H1 (cell line): ENCODE measurements at regions of chr15 and their contacts with region 1.

Region 1: GRCh38 chr15:29925227-29926082 is 103.2 kb upstream of the TJP1 start:
- DNase-seq: peak; percentile 79 to 93
- H3K4me3 ChIP-seq: no peak overlapping the region
- H3K27ac ChIP-seq: 0 out of 2 replicates have a peak overlapping the region, but pooled peaks have one; percentile 16
- H3K4me1 ChIP-seq: peaks cover 7 to 15% (median 10%) of the 10 kb centered on the region in 4 experiments
- H3K27me3 ChIP-seq: no peaks in the 10 kb centered on the region
- CTCF ChIP-seq: peak; percentile 97 to 99 (median 99)
- EP300 ChIP-seq: no peak
- POLR2A ChIP-seq: peak in 1 of 2 experiments; percentile 79; a peak in 2 of 3 replicates
- RAD21 ChIP-seq: peak; percentile 94 to 97

Region 2: DNA sequence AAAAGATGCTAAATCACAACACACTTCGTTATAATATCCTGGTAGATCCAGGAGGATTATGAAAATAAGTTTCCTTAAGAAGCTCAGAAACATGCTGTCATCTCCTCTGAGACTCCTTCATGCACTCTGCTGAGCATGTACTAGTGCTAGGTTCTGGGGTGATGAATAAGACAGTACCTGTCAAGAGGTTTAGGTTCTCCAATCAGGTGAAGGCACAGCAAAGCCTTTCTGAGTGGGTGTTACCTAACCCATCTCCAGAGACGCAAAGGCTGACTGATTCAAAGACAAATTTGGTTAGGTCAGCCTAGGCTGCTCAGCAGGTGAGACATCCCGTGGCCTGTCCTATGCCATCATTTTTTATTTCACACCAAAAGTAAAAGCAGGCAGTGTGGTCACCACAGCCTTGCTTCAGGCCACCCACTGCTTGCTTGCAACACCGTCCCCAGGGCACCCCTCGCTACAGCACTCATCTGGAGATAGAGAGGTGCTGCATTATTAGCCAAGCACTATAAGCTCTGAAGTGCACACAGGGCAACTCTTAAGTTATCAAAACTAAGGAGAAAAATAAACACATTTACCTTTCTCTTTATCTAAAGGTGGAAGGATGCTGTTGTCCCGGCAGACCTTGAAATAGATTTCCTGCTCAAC is 220.4 kb before region 1 on chr15:
- CTCF ChIA-PET with region 1: interaction called, 21 read pairs
- POLR2A ChIA-PET with region 1: interaction called, 3 read pairs
- DNase-seq: no peak
- H3K4me3 ChIP-seq: no peak overlapping the region
- H3K27ac ChIP-seq: no peak overlapping the region
- H3K4me1 ChIP-seq: no peaks in the 10 kb centered on the region
- H3K27me3 ChIP-seq: no peaks in the 10 kb centered on the region
- CTCF ChIP-seq: no peak
- EP300 ChIP-seq: no peak
- POLR2A ChIP-seq: no peak
- RAD21 ChIP-seq: no peak

Region 3: GRCh38 chr15:29821416-29822131 is 103.9 kb before region 1 on chr15:
- CTCF ChIA-PET with region 1: interaction called, 12 read pairs
- POLR2A ChIA-PET with region 1: interaction called, 33 read pairs
- DNase-seq: peak in 1 of 2 experiments; percentile 79
- H3K4me3 ChIP-seq: peak overlapping the region; percentile 88 to 90 (median 88)
- H3K27ac ChIP-seq: peak overlapping the region; percentile 97
- H3K4me1 ChIP-seq: peaks cover 0 to 5% (median 2%) of the 10 kb centered on the region in 4 experiments; a peak in 3 of 7 replicates
- H3K27me3 ChIP-seq: peaks cover 0 to 6% (median 3%) of the 10 kb centered on the region in 4 experiments; a peak in 3 of 7 replicates
- CTCF ChIP-seq: no peak
- EP300 ChIP-seq: peak in 1 of 2 experiments; percentile 89; a peak in 1 of 3 replicates
- POLR2A ChIP-seq: peak; percentile 51 to 72
- RAD21 ChIP-seq: peak in 1 of 2 experiments; percentile 21; a peak in 1 of 4 replicates

Region 4: DNA sequence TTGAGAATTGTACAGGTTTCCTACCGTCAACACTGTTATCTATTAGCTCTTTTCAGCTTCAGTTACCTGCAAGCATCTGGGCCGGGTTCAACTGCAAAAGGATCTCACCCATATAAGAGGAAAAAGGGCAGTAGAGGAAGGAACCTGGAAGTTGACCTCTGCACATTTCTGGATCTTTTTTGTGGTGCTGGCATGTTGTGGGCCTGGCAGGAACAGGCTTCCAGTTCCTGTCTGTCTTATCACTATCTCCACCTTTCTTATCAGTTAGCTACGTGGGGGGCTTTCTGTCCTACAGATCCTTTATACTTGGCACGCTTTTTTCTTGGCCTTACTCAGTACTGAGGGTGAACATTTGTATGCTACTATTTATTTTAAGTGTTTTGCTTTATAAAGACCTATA is 61.0 kb before region 1 on chr15:
- CTCF ChIA-PET with region 1: interaction called, 14 read pairs
- POLR2A ChIA-PET with region 1: interaction called, 3 read pairs
- DNase-seq: no peak
- H3K4me3 ChIP-seq: no peak overlapping the region
- H3K27ac ChIP-seq: no peak overlapping the region
- H3K4me1 ChIP-seq: peaks cover 0 to 4% (median 3%) of the 10 kb centered on the region in 4 experiments; a peak in 4 of 7 replicates
- H3K27me3 ChIP-seq: no peaks in the 10 kb centered on the region
- CTCF ChIP-seq: no peak
- EP300 ChIP-seq: no peak
- POLR2A ChIP-seq: no peak
- RAD21 ChIP-seq: no peak

Region 5: GRCh38 chr15:29888646-29889045 is 36.8 kb before region 1 on chr15:
- CTCF ChIA-PET with region 1: interaction called, 28 read pairs
- POLR2A ChIA-PET with region 1: interaction called, 3 read pairs
- DNase-seq: no peak
- H3K4me3 ChIP-seq: no peak overlapping the region
- H3K27ac ChIP-seq: no peak overlapping the region
- H3K4me1 ChIP-seq: peaks cover 6 to 16% (median 9%) of the 10 kb centered on the region in 4 experiments; a peak in 6 of 7 replicates
- H3K27me3 ChIP-seq: no peaks in the 10 kb centered on the region
- CTCF ChIP-seq: no peak
- EP300 ChIP-seq: no peak
- POLR2A ChIP-seq: no peak
- RAD21 ChIP-seq: no peak

Region 6: DNA sequence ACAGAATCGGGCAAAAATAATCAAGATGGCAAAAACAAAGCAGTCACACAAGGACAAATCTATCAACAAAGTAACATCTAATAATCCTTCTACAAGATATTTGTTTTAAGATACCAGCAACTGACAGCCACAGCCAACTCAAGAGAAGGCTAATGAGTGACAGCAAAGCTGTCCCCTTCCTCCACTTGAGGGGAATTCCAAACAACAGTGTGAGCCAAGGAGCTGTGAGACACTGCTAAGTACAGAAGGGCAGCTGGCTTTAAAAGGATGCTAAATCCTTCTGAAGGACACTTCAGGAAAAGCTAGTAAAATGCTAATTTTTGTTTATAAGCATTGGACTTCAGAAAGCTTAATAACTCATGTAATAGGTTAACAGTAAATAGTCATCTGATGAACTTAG is 37.0 kb after region 1 on chr15:
- CTCF ChIA-PET with region 1: interaction called, 11 read pairs
- POLR2A ChIA-PET with region 1: no interaction called
- DNase-seq: no peak
- H3K4me3 ChIP-seq: peak overlapping the region in 1 of 4 experiments; percentile 12; a peak in 1 of 8 replicates
- H3K27ac ChIP-seq: no peak overlapping the region
- H3K4me1 ChIP-seq: peaks cover 0 to 10% (median 2%) of the 10 kb centered on the region in 4 experiments; a peak in 5 of 7 replicates
- H3K27me3 ChIP-seq: peaks cover 2 to 7% (median 3%) of the 10 kb centered on the region in 4 experiments; a peak in 6 of 7 replicates
- CTCF ChIP-seq: no peak
- EP300 ChIP-seq: no peak
- POLR2A ChIP-seq: no peak
- RAD21 ChIP-seq: no peak